ENCODE measurements at regions of chr2 and their contacts with region 1.

Region 1: GRCh38 chr2:213119061-213119856 is 32.2 kb downstream of the IKZF2 start:
- DNase-seq: no peak
- H3K4me3 Mint-ChIP-seq: no peak overlapping the region
- H3K27ac Mint-ChIP-seq: peak overlapping the region; percentile 56
- H3K4me1 Mint-ChIP-seq: peaks cover 14% of the 10 kb centered on the region
- H3K27me3 Mint-ChIP-seq: peaks cover 1% of the 10 kb centered on the region

Region 2: DNA sequence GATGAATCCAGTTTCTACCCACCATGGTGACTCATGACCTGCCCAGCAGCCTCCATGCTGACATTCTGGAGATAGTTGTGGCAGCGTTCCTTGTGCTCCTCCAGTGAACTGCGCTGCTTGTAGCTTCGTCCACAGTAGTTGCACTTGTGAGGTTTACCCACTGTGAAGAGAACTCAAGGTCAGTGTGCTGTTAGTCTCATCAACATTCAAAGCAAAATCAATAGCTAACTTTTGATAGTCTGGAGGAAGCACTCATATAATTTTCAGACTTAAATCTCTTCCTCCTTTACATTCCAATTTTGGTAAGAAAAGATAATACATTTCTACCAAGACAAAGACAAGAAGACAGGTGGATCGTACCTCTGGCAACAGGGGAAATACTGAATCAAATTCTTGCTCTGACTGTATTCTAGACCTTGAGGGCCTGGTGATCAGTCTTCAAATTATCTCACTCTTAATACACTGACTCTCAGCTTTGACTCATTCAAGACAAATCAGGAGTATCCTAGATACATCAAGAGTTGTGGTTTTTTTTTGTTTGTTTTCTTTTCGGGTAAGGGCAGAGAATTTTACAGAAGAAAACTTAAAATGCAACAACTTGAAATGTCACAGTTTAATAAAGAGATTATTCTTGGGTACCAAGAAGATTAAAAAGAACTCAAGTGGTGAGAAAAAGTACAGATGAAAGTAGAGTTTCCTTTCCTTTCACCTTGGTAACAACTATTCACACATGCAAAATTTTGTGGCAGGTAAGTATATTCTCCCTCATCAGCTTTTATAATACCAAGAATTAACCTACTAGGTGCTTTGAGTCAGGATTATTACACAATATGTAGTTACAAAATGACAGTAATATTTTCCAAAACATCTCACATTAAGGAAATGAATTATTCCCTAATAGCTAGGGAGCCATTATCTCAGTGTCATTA is 97.0 kb before region 1 on chr2:
- intact Hi-C with region 1: loop called (anchors 1 kb)
- DNase-seq: no peak
- H3K4me3 Mint-ChIP-seq: no peak overlapping the region
- H3K27ac Mint-ChIP-seq: peak overlapping the region; percentile 50
- H3K4me1 Mint-ChIP-seq: peaks cover 20% of the 10 kb centered on the region
- H3K27me3 Mint-ChIP-seq: peaks cover 10% of the 10 kb centered on the region

Measured in activated T-helper 1 cell treated with anti-CD3 and anti-CD28 coated beads, Interleukin-12 subunit alpha, Interleukin-12 subunit beta, Interleukin-2, Interleukin-4 antibody, amounts not matched to agents 30 ng/mL and 10 ng/mL and 1 ng/mL, durations not matched to agents 14 hours and 24 hours and 36 hours (primary cell).